RWPE1 (cell line): ENCODE measurements at regions of chr19 and their contacts with region 1.

Region 1: DNA sequence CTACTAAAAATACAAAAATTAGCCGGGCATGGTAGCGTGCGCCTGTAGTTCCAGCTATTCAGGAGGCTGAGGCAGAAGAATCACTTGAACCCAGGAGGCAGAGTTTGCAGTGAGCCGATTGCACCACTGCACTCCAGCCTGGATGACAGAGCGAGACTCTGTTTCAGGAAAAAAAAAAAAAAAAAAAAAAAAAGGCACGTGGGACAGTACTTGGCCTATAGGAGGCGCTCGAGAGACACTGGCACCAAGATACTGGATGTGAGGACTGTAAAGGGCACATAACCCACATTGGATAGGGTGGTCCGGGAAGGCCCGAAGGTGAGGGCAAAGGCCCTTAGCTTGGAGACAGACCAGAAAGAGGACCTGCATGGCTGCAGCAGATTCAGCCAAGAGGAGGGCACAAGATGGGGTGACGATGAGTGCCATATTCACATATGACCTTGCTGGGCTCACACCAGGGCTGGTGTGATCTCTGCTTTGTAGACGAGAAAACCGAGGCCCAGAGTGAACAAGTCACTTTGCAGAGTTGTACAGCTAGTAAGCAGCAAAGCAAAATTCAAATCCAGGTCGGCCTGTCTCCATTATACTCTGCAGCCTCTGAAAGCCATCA is 89.4 kb downstream of the DPF1 start:
- DNase-seq: no peak
- H3K27ac ChIP-seq: peak overlapping the region; percentile 97
- CTCF ChIP-seq: peak; percentile 77

Region 2: GRCh38 chr19:37902668-37903067 is 232.0 kb before region 1 on chr19:
- CTCF ChIA-PET with region 1: interaction called, 16 read pairs
- POLR2A ChIA-PET with region 1: no interaction called
- DNase-seq: peak; percentile 78
- H3K27ac ChIP-seq: no peak overlapping the region
- CTCF ChIP-seq: peak; percentile 83

Region 3: GRCh38 chr19:38061294-38061693 is 73.4 kb before region 1 on chr19:
- CTCF ChIA-PET with region 1: no interaction called
- POLR2A ChIA-PET with region 1: no interaction called
- DNase-seq: peak; percentile 41
- H3K27ac ChIP-seq: peak overlapping the region; percentile 39
- CTCF ChIP-seq: no peak

Region 4: DNA sequence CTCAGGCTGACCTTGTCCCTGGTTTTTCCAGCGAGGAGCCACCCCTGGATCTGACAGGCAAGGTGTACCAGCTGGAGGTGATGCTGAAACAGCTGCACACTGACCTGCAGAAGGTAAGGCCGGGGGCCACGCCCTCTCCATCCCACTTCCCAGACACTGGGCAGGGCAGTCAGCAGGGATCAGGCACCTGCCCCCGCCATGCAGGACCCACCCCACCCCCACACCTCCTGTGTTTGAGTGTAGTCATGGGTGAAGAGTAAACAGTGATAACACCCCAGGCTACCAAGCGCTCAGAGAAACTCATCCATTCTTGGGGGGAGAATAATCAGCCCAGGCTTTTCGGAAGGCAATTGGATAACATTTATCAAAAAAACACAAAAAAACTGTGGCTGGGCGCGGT is 69.5 kb after region 1 on chr19:
- CTCF ChIA-PET with region 1: no interaction called
- POLR2A ChIA-PET with region 1: no interaction called
- DNase-seq: no peak
- H3K27ac ChIP-seq: peak overlapping the region; percentile 54
- CTCF ChIP-seq: no peak

Region 5: DNA sequence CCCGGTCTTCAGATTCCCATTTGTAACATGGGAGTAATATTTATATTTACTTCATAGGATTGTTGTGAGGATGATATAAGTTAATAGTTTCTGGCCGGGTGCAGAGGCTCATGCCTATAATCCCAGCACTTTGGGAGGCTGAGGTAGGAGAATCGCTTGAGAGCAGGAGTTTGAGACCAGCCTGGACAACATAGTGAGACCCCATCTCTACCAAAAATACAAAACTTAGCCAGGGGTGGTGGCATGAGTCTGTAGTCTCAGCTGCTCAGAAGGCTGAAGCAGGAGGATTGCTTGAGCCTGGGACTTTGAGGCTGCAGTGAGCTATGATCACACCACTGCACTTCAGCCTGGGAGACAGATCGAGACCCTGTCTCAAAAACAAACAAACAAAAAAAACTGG is 212.2 kb after region 1 on chr19:
- CTCF ChIA-PET with region 1: no interaction called
- POLR2A ChIA-PET with region 1: interaction called, 10 read pairs
- DNase-seq: no peak
- H3K27ac ChIP-seq: no peak overlapping the region
- CTCF ChIP-seq: no peak